ENCODE measurements at regions of chr13 and their contacts with region 1.

Region 1: DNA sequence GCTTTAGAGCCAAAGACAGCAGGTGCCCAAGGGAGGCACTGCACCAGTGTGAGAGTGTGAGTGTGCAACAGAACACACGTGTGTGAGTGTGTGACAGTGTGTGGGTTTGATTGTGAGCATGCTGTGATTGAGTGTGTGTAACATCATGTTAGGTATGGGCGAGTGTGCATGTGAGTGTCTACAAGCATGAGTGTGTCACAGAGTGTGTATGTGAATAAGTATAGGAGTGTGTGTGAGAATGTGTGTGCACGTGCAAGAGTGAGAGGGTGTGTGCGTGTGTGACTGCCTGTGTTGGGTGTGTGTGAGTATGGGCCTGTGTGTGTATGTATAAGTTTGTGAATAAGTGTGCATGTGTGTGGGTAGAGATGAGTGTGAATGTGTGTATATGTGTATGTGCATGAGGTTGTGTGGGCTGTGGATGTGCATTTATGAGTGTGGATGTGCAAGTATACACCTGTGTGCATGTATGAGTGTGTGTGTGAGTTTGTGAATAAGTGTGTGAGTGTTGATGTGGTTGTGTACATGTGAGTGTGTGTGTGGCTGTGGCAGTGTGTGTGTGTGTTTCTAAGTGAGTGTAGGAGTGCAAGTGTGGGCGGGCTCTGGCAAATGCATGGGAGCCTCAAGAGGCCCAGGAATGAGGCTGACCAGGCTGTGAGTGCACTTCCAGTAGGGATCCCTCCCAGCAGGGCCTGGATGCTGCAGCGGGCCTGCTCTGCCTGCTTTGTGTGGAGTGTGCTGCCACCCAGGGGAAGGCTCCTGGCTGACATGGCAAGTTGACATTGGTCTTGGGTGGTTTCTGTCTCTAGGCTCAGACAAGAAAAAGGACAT is 198.4 kb downstream of the COL4A1 start:
- DNase-seq: no peak
- H3K4me3 ChIP-seq: no peak overlapping the region
- CTCF ChIP-seq: peak; percentile 94

Region 2: DNA sequence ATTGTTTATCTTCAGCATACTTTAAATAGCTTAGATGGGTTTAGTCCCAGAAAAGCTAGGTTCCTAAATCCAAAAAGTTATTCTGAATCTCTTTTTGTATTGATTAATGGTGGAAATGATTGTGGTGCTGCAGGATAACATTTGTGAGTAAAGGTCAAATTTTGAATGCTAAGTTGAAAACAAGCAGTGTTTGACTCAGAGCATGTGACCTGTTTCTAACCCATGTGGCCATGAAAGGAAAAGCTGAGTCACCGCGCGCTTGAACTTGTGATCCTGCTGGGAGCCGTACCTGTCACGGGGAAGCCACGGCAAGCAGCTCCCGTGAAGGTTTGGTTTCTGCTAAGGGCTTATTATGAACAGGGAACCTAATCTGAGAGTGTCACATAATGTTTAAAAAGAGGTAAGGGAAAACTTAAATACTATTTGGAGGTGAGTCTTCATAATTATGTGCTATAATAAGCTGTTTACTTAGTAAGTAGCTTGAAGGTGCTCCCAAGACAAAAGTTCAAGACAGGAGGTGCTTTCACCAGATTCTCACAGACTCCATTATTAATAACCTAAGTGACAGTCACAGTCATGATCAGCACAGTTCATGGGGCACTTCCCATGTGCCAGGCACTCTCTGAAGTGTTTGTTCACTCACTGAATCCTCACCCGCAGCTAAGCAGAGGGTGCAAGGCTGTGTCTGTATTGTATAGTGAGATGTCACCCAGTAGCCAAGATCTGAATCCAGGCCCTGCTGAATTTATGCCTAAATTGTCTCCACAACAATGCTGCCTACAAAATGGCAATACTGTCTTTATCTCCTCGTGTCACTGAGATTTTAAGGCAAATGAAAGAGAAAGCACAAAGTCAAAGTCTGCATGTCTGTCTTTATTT is 1192.7 kb before region 1 on chr13:
- CTCF ChIA-PET with region 1: interaction called, 12 read pairs
- POLR2A ChIA-PET with region 1: no interaction called
- DNase-seq: no peak
- H3K4me3 ChIP-seq: no peak overlapping the region
- CTCF ChIP-seq: no peak

Region 3: DNA sequence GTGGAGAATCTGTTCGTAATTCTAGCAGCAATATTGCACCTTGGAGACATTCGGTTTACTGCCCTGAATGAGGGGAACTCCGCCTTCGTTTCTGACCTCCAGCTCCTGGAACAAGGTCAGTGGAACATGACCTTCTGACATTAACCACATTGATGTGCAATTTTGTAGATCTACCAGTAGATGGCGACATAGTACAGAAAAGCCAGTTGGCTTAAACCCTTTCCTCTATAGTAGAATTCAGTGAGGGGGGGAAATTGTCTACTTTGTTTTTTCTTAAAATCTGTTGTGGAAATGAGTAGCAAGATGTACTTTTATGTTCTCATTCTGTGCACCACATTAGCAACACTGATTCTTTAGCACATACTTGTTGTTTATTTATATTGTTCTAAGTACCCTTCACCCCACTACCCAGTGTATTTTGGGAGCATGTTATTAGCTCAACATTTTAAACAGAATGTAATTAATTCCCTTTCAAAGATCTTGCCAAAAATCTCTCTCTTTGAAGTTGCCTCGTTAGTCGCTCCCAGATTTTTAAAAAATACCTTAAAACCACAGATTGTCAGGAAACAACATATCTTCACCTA is 1146.9 kb before region 1 on chr13:
- CTCF ChIA-PET with region 1: interaction called, 28 read pairs
- POLR2A ChIA-PET with region 1: no interaction called
- DNase-seq: no peak
- H3K4me3 ChIP-seq: no peak overlapping the region
- CTCF ChIP-seq: peak; percentile 51

Region 4: DNA sequence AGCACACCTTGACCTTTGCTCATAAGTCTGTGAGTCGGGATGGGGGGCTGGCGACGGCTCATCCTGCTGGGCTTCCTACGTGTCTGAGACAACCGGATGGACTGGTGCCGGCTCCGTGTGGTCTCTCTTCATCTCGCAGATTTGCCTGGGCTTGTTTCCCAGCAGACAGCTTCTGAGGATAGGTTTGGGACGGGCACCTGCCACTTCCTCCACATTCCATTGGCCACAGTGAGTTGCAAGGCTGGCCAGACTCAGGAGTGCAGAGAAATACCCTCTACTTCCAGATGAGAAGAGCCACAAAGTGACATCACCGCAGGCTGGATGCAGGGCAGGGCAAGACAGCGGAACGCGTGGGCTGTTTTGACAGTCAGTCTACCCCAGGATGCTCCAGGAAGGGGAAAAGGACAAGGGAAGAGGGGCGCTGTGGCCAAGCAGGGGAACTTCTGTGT is 370.2 kb before region 1 on chr13:
- CTCF ChIA-PET with region 1: no interaction called
- POLR2A ChIA-PET with region 1: no interaction called
- DNase-seq: no peak
- H3K4me3 ChIP-seq: no peak overlapping the region
- CTCF ChIP-seq: no peak

Region 5: DNA sequence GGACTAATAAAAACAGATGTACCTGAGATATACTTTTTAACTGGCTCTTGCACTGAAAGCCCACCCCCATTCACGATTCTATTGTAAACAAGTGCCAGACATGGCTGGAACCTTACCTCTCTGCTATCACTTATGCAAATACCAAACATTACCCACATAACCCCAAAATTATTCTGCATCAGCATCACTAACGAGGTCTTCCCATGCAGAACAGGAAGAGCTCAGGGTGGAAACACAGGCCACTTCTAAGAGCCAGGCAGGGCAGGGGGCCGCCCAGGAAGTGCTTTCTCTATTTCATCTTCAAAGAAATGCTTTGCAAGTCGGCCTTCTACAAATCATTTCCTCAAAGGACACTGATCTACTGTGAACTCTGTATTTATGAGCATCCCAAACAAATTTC is 329.5 kb before region 1 on chr13:
- CTCF ChIA-PET with region 1: interaction called, 18 read pairs
- POLR2A ChIA-PET with region 1: no interaction called
- DNase-seq: no peak
- H3K4me3 ChIP-seq: no peak overlapping the region
- CTCF ChIP-seq: no peak

Region 6: DNA sequence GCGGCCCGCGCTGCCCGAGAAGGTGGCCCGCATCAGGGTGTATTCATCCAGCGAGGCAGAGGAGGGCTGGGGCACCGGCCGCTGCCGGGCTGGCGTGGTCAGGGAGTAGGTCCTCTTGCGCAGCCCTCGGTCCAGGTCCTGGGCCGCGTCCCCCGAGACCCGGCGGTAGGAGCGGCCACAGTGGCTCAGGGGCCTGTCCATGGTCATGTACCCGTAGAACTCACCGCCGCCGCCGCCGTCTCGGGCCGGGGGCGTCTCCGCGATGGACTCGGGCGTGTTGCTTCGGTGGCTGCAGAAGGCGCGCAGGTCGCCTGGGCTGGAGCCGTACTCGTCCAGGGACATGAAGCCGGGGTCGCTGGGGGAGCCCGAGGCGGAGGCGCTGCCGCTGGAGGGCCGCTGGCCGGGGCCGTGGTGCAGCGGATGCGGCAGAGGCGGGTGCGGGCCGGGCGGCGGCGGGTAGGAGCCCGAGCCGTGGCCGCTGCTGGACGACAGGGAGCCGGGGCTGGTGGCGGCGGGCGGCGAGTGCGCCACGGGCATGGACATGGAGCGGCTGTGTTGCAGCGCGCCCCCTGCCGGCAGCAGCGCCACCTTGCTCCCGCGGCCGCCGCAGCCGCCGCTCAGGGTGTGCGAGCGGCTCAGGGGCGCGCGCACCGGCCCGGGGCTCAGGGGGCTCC is 324.2 kb before region 1 on chr13:
- CTCF ChIA-PET with region 1: interaction called, 25 read pairs
- POLR2A ChIA-PET with region 1: no interaction called
- DNase-seq: no peak
- H3K4me3 ChIP-seq: peak overlapping the region; percentile 64
- CTCF ChIP-seq: peak; percentile 74

Region 7: DNA sequence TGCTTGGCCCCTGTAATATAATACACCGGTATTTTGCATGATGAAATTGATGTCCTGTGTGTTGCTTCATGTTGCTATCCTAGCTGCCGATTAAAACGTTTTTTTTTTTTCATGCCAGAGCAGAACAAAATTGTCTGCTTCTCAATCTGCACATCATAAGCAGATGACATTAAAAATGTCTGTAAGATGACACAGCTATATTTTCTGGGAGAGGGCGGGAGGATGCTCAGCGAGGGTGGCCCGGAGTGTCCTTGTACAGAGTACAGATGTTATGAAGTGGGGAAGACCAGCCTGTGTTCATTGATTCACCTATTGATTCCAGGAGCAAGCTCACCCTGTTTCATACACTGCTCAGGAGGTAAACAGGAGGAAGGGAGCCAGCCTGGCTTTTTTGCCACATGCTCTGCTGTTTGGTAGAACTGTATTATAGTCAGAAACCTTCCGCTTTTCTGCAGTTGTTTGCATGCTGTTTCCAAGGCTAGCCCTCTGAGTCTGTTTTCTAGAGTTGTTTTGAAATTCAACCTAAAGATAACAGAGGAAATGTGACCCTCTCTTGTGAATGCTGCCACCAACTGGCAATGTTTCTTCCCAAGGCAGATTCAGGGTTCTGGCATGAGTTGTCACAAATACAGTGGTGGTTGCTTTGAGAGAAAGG is 317.5 kb before region 1 on chr13:
- CTCF ChIA-PET with region 1: interaction called, 25 read pairs
- POLR2A ChIA-PET with region 1: no interaction called
- DNase-seq: no peak
- H3K4me3 ChIP-seq: no peak overlapping the region
- CTCF ChIP-seq: peak; percentile 42

Region 8: DNA sequence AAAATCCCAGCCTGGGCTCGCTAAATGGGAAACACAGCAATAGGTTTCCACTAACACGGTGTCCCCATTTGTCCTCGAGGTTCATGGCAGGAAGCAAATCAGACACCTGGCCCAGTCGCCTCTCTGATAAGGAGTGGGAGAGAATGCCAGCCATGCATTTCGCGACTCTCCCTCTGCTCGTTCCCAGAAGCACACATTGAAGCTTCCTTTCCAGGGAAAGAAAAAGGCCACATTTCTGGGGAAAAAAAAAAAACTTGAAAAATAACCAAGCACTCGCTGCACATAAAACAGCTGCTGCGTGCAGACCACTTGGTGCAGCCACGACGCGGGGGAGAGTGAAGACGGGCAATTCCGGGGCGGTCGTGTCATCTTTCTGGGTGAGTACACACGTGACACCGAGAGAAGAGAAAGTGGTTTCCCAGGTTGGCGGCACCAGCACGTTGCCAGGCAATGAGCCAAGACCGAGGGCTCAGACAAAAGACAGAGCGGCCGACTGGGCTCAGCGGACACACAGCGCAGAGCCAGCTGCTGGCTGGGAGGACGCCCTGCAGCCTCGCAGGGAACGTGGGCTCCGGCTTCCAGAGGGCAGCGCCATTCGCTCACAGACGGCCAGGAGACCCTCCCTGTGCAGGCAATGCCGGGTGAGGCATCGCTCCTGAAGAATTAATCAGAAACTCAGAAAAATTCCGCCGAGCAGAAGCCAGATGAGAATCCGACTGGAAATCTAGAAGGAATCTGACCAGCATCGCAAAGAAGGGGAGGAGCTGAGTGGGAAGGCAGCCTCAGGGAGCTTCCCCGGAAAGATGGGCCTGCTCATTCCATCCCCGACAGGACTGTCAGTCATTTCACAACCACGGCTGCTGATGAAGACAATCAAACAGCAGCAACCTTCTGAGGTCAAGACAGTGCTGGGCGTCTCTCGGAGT is 239.0 kb before region 1 on chr13:
- CTCF ChIA-PET with region 1: interaction called, 11 read pairs
- POLR2A ChIA-PET with region 1: interaction called, 3 read pairs
- DNase-seq: no peak
- H3K4me3 ChIP-seq: peak overlapping the region; percentile 46
- CTCF ChIP-seq: peak; percentile 53

Measured in AG04449 (cell line).